ENCODE measurements at regions of chr17 and their contacts with region 1.

Region 1: DNA sequence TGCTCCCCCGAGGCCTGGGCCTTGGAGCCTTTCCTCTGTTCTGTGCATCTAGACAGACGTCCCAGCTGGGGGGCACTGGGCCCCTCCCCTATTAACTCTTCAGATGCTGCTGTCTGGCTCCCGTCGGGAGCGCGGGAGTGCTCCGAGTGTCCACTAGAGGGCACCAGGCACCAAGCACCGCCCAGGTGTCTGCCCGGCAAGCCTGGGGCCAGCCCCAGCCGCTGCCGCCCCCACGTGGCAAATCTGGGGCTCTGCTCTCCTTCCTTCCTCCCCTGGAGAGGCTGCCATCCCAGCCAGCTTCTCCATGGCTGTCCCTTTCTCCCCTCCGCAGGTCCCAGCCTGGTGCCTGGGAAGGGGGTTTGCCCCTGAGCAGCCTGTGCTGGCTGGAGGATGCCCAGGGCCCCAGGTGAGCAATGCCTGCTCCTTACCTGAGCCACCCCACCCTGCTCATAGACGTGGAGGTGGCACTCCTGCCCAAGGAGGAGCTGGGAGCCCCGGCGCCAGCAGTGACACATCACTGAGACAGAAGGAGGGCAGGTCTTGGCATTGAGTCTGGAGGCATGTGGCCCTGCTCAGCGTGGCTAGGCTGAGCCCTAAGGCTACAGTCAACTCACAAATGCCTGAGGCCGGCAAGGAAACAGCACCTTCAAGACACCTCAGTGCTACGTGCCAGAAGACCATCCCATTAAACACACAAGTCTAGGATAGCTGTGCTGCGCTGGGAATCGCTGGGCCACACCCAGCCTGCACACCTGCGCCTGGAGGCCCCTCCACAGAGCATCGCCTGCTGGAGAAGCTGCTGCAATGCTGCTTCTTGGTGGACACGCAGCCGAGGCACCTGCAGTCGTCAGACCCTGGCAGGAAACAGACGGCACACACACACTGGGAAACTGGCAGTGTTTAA is 19.7 kb downstream of the TMEM235 start:
- DNase-seq: peak; percentile 86 to 97
- H3K4me3 ChIP-seq: peak overlapping the region in 3 of 4 experiments; percentile 6 to 23 (median 17); a peak in 1 of 8 replicates
- H3K27ac ChIP-seq: no peak overlapping the region
- H3K4me1 ChIP-seq: peaks cover 0 to 23% (median 13%) of the 10 kb centered on the region in 4 experiments; a peak in 5 of 7 replicates
- H3K27me3 ChIP-seq: no peaks in the 10 kb centered on the region
- CTCF ChIP-seq: peak; percentile 99
- EP300 ChIP-seq: no peak; a peak in 1 of 3 replicates
- POLR2A ChIP-seq: no peak
- RAD21 ChIP-seq: peak; percentile 93 to 95

Region 2: DNA sequence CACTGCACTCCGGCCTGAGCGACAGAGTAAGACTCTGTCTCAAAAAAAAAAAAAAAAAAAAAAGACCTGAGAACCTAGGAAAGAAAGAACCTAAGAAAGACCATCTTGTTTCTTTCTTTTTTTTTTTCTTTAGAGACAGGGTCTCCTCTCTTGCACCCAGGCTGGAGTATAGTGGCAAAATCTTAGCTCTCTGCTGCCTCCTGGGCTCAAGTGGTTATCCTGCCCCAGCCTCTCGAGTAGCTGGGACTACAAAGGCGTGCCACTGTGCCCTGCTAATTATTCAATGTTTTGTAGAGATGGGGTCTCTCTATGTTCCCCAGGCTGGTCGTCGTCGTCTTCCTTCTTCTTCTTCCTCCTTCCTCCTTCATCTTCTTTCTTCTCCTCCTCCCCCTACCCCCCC is 44.8 kb before region 1 on chr17:
- CTCF ChIA-PET with region 1: interaction called, 14 read pairs
- POLR2A ChIA-PET with region 1: no interaction called
- DNase-seq: no peak
- H3K4me3 ChIP-seq: no peak overlapping the region
- H3K27ac ChIP-seq: no peak overlapping the region
- H3K4me1 ChIP-seq: no peaks in the 10 kb centered on the region
- H3K27me3 ChIP-seq: no peaks in the 10 kb centered on the region
- CTCF ChIP-seq: peak; percentile 34 to 43 (median 34); a peak in 3 of 4 replicates
- EP300 ChIP-seq: no peak
- POLR2A ChIP-seq: no peak
- RAD21 ChIP-seq: peak; percentile 22 to 54; a peak in 3 of 4 replicates

Region 3: DNA sequence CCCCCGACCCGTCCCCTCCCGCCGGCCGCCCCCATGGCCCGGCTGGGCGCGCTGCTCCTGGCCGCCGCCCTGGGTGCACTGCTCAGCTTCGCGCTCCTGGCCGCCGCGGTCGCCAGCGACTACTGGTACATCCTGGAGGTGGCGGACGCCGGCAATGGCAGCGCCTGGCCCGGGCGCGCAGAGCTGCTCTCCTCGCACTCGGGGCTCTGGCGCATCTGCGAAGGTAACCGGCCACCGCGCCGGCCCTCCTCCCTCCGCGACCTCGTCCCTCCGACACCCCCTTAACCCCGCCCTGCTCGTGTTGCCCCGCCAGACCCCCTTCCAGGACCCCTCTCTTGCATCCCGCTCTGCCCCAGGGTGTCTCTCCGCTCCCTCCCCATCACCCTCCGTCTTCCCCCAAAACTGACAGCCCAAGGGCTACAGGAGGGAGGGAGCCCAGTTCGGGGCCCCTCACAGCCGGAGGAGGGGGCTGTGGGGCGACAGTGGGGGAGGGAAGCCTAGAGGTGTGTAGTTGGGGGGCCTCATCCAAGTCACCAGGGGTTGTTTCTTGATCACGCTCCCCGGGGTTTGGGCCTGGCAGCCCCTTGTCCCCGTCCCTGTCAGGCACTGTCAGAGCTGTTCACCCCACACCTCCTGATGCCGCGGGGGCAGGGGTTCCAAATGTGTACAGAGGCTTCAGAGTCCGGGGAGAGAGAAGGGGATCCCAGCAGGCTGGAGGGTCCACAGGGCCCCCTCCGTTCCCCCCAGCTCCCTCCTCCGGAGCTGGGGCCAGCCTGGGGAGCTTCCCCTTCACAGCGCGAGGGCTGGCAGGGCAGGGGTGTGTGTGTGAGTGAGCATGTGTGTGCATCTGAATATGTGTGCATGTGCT is 18.9 kb before region 1 on chr17:
- CTCF ChIA-PET with region 1: interaction called, 53 read pairs
- POLR2A ChIA-PET with region 1: interaction called, 19 read pairs
- DNase-seq: peak in 1 of 2 experiments; percentile 79
- H3K4me3 ChIP-seq: peak overlapping the region; percentile 55 to 68 (median 61)
- H3K27ac ChIP-seq: no peak overlapping the region
- H3K4me1 ChIP-seq: peaks cover 0 to 8% (median 5%) of the 10 kb centered on the region in 4 experiments; a peak in 5 of 7 replicates
- H3K27me3 ChIP-seq: peaks cover 0 to 27% (median 22%) of the 10 kb centered on the region in 4 experiments; a peak in 6 of 7 replicates
- CTCF ChIP-seq: 0 out of 4 replicates have a peak, but pooled peaks of 1 of the 3 experiments have one; percentile 2
- EP300 ChIP-seq: no peak
- POLR2A ChIP-seq: no peak
- RAD21 ChIP-seq: no peak; a peak in 1 of 4 replicates

Region 4: GRCh38 chr17:78278139-78279127 is 27.3 kb after region 1 on chr17:
- CTCF ChIA-PET with region 1: interaction called, 50 read pairs
- POLR2A ChIA-PET with region 1: no interaction called
- DNase-seq: no peak
- H3K4me3 ChIP-seq: no peak overlapping the region
- H3K27ac ChIP-seq: no peak overlapping the region
- H3K4me1 ChIP-seq: peaks cover 0 to 18% (median 12%) of the 10 kb centered on the region in 4 experiments; a peak in 5 of 7 replicates
- H3K27me3 ChIP-seq: no peaks in the 10 kb centered on the region
- CTCF ChIP-seq: no peak
- EP300 ChIP-seq: no peak
- POLR2A ChIP-seq: no peak
- RAD21 ChIP-seq: no peak

Region 5: GRCh38 chr17:78313735-78314648 is 62.8 kb after region 1 on chr17:
- CTCF ChIA-PET with region 1: interaction called, 12 read pairs
- POLR2A ChIA-PET with region 1: interaction called, 4 read pairs
- DNase-seq: peak; percentile 77 to 88
- H3K4me3 ChIP-seq: peak overlapping the region; percentile 26 to 67 (median 44)
- H3K27ac ChIP-seq: no peak overlapping the region
- H3K4me1 ChIP-seq: peaks cover 8 to 38% (median 32%) of the 10 kb centered on the region in 4 experiments
- H3K27me3 ChIP-seq: peaks cover 0 to 3% (median 0%) of the 10 kb centered on the region in 4 experiments; a peak in 2 of 7 replicates
- CTCF ChIP-seq: no peak
- EP300 ChIP-seq: no peak
- POLR2A ChIP-seq: no peak; a peak in 1 of 3 replicates
- RAD21 ChIP-seq: no peak

Region 6: GRCh38 chr17:78421484-78422266 is 170.5 kb after region 1 on chr17:
- CTCF ChIA-PET with region 1: interaction called, 32 read pairs
- POLR2A ChIA-PET with region 1: interaction called, 4 read pairs
- DNase-seq: peak; percentile 65 to 95
- H3K4me3 ChIP-seq: no peak overlapping the region
- H3K27ac ChIP-seq: no peak overlapping the region
- H3K4me1 ChIP-seq: peaks cover 0 to 7% (median 0%) of the 10 kb centered on the region in 4 experiments; a peak in 3 of 7 replicates
- H3K27me3 ChIP-seq: no peaks in the 10 kb centered on the region
- CTCF ChIP-seq: peak; percentile 98 to 99 (median 99)
- EP300 ChIP-seq: no peak
- POLR2A ChIP-seq: no peak
- RAD21 ChIP-seq: peak; percentile 95 to 96